IMR-90 (cell line): ENCODE measurements at regions of chr7 and their contacts with region 1.

Region 1: GRCh38 chr7:70829221-70830059 is 302.5 kb upstream of the GALNT17 start:
- DNase-seq: peak; percentile 56
- ATAC-seq: peak; percentile 99
- H3K4me3 ChIP-seq: no peak overlapping the region
- H3K27ac ChIP-seq: no peak overlapping the region
- H3K4me1 ChIP-seq: no peaks in the 10 kb centered on the region
- H3K27me3 ChIP-seq: no peaks in the 10 kb centered on the region; the same call in 1 of the 2 replicates
- CTCF ChIP-seq: peak; percentile 75
- POLR2A ChIP-seq: no peak
- RAD21 ChIP-seq: peak; percentile 66

Region 2: GRCh38 chr7:70752794-70753241 is 76.6 kb before region 1 on chr7:
- CTCF ChIA-PET with region 1: no interaction called
- POLR2A ChIA-PET with region 1: no interaction called
- dilution Hi-C with region 1: no loop called
- in situ Hi-C with region 1: no loop called
- intact Hi-C with region 1: no loop called
- DNase-seq: peak; percentile 57
- ATAC-seq: peak; percentile 51
- H3K4me3 ChIP-seq: no peak overlapping the region
- H3K27ac ChIP-seq: no peak overlapping the region
- H3K4me1 ChIP-seq: no peaks in the 10 kb centered on the region
- H3K27me3 ChIP-seq: no peaks in the 10 kb centered on the region
- CTCF ChIP-seq: no peak
- POLR2A ChIP-seq: no peak
- RAD21 ChIP-seq: no peak

Region 3: GRCh38 chr7:71733107-71733870 is 903.8 kb after region 1 on chr7:
- CTCF ChIA-PET with region 1: no interaction called
- POLR2A ChIA-PET with region 1: no interaction called
- dilution Hi-C with region 1: no loop called
- in situ Hi-C with region 1: loop called (anchors 25 kb)
- intact Hi-C with region 1: loop called (anchors 1 kb)
- DNase-seq: peak; percentile 22
- ATAC-seq: peak; percentile 70
- H3K4me3 ChIP-seq: no peak overlapping the region
- H3K27ac ChIP-seq: no peak overlapping the region
- H3K4me1 ChIP-seq: no peaks in the 10 kb centered on the region
- H3K27me3 ChIP-seq: no peaks in the 10 kb centered on the region
- CTCF ChIP-seq: peak; percentile 59
- POLR2A ChIP-seq: no peak
- RAD21 ChIP-seq: peak; percentile 68

Region 4: DNA sequence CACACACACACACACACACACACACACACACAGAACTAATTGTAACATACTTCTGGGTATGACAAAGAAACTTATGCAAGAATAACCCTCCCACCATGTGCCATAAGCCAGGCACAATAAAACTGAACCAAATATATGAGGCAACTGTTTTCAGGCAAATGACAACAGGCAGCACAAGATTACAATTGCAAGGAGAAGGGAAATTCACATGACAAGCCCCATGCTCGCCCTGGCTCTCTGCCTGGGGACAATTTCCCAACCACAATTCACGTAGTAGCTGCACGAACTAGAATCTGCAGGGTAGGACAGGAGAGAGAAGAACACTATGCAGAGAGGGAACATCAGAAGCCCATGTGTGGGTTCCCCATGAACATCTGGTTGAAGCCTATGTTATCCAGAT is 1439.4 kb after region 1 on chr7:
- CTCF ChIA-PET with region 1: no interaction called
- POLR2A ChIA-PET with region 1: no interaction called
- dilution Hi-C with region 1: no loop called
- in situ Hi-C with region 1: no loop called
- intact Hi-C with region 1: loop called (anchors 10 kb)
- DNase-seq: no peak
- ATAC-seq: no peak
- H3K4me3 ChIP-seq: no peak overlapping the region
- H3K27ac ChIP-seq: no peak overlapping the region
- H3K4me1 ChIP-seq: no peaks in the 10 kb centered on the region
- H3K27me3 ChIP-seq: no peaks in the 10 kb centered on the region
- CTCF ChIP-seq: no peak
- POLR2A ChIP-seq: no peak
- RAD21 ChIP-seq: no peak